Activated CD4-positive, alpha-beta T cell treated with anti-CD3 and anti-CD28 coated beads, Interleukin-2, amount 10 ng/mL, durations not matched to agents 24 days and 14 days (primary cell): ENCODE measurements at regions of chr4 and their contacts with region 1.

Region 1: DNA sequence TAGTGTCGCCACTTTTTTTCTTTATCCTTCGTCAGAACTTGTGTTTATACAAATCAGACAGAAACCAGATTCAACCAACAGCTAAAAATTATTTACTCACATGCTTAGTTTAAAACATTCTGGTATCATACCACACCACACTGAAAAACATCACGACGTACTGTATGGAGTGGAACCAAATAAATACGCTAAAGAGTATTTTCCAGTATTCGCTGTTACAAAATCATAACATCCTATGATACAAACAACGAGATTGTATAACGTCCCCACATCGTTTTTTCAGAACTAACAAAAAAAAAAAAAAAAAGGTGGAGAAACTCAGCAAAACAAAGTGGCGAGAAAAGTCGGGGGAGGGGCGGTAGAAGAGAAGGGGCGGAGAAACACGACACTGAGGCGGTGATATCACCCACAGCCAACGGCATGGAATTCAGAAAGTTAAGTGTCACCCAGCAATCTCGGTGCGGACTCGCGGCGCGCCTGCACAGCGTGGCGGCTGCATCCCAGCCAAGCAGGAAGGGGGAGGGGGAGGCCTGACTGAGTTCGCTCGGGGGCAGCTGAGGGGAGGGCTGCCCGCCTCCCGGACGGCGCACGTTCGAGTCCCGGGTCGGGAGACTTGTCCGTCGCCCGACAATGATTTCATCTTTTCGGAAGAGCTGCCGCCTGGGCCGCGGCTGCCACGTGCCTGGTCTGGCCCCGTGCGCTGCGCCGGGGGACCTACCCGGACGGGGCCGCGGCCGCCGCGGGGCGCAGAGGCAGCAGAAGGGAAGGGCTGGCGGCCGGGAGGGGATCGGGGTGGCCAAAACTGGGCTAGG is 920 bp downstream of the SETD7 start:
- DNase-seq: peak; percentile 95
- H3K4me3 Mint-ChIP-seq: peak overlapping the region; percentile 89
- H3K27ac Mint-ChIP-seq: peak overlapping the region; percentile 97
- H3K4me1 Mint-ChIP-seq: peaks cover 38% of the 10 kb centered on the region
- H3K27me3 Mint-ChIP-seq: peaks cover 7% of the 10 kb centered on the region

Region 2: GRCh38 chr4:139015269-139015947 is 539.7 kb before region 1 on chr4 and contains the start of gene NOCT:
- intact Hi-C with region 1: loop called (anchors 1 kb)
- DNase-seq: peak; percentile 97
- H3K4me3 Mint-ChIP-seq: peak within 1 kb of the TSS; percentile 93
- H3K27ac Mint-ChIP-seq: peak within 1 kb of the TSS; percentile 96
- H3K4me1 Mint-ChIP-seq: peaks cover 35% of the 10 kb centered on the region
- H3K27me3 Mint-ChIP-seq: no peaks in the 10 kb centered on the region
- total RNA-seq, gene NOCT: 21.3 and 25.3 TPM in 2 replicates

Region 3: DNA sequence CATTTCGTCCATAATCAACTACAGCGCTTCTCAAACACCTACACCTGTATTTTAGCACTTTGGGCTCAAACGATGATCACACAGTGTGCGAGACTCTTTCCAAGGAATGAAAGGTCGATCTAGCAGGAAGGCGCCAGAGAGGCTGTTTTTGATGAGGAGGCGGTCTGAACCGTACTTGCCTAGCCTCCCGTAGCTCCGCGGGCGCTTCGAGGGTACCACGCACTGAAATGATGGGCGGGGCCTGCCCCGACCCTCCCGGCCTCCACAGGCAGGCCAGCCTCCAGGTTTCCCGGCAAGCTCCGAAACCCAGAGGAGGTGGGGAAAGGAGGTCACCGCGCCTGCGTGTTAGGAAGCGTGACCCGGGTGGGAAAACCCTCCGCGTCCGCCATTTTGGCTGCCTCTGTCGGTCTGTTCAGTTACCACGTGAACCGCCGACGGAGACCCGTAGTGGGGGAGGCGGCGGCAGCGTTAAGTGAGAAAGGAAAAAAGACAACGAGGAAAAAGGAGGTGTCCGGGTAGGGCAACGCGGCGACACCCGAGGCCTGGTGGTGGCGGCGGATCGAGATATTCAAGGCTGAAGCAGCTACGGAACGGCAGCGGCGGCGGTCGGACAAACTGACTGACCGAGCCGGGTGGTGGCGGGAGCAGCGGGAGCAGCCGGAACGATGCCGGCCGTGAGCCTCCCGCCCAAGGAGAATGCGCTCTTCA is 253.8 kb before region 1 on chr4 and contains the start of gene NAA15:
- intact Hi-C with region 1: loop called (anchors 2 kb)
- DNase-seq: peak; percentile 99
- H3K4me3 Mint-ChIP-seq: peak within 1 kb of the TSS; percentile 99
- H3K27ac Mint-ChIP-seq: peak within 1 kb of the TSS; percentile 100
- H3K4me1 Mint-ChIP-seq: peaks cover 52% of the 10 kb centered on the region
- H3K27me3 Mint-ChIP-seq: no peaks in the 10 kb centered on the region
- total RNA-seq, gene NAA15: 114 and 115 TPM in 2 replicates

Region 4: DNA sequence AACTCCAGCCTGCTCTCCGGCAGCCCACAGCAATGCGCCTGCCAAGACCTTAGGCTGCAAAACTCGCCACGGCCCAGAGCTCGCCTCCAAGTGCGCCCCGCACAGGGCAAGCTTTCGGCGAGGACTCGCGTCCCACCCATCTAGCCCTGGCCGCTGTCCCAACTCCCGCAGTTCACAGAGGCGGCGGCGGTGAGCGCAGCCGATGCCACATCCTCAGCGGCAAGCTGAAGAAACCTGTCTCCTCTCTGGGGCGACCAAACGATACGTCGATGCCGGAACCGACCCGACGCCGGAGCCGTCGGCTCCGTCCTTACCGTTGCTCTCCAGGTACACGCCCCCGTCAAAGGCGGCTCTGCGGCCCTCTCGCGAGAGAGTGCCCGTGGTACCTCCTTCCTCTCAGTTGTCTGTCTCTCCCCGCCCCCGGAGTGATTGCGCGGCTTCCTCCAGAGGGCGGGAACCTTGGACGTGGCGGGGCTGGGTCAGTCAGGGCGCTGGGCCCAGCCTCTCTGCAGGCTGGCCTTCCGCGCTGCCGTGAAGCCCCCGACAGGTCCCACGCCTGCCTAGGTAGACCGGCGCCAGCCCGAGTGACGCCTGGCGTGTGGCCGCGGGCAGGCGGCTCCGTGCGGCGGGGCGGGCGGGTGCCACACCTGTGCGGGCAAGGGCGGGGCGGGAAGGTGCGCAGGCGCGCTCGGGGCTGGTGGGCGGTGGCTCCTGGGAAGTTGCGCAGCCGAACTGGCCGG is 101.6 kb before region 1 on chr4:
- intact Hi-C with region 1: loop called (anchors 1 kb)
- DNase-seq: peak; percentile 99
- H3K4me3 Mint-ChIP-seq: peak overlapping the region; percentile 92
- H3K27ac Mint-ChIP-seq: peak overlapping the region; percentile 96
- H3K4me1 Mint-ChIP-seq: peaks cover 49% of the 10 kb centered on the region
- H3K27me3 Mint-ChIP-seq: no peaks in the 10 kb centered on the region

Region 5: DNA sequence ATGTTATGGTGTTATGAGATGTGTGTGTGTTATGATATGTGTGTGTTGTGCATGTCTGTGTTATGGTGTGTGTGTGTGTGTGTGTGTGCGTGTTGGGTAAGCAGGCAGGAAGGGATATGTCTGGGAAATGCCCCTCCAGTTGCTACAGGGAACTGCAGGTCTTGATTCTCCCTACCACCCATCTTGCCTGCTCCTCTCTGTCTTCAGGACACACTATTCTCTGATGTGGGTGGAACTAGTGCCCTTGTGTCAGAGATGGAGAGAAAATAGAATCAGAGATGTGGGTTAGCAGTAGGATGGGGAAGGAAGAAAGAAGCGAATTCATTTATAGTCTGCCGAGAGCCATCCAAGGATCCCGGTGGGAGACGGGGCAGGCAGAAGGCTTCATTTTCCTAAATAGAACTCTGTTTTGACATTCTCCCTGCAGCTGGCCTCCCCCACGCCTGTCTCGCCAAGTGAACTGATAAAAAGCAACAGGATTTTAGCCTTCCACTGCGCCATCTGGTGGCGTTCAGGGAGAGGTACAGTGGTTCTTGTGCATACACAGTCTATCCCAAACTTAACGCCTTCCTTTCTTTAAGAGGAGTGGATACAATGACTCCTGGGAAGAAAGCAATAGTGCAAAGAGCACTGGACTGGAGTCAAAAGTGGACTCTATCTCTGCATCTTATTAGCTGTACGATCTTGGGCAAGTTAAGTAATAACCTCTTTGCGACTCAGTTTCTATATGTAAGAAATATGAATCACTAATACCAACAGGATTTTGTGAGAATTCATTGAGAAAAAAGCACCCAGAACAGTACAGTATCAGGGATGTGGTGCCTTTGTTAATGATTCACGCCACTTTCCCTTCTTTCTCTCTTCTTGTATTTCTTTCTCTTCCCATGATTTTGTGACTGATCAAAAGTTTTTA is 96.4 kb after region 1 on chr4:
- intact Hi-C with region 1: loop called (anchors 2 kb)
- DNase-seq: peak; percentile 88
- H3K4me3 Mint-ChIP-seq: no peak overlapping the region
- H3K27ac Mint-ChIP-seq: no peak overlapping the region
- H3K4me1 Mint-ChIP-seq: peaks cover 10% of the 10 kb centered on the region
- H3K27me3 Mint-ChIP-seq: peaks cover 5% of the 10 kb centered on the region

Region 6: DNA sequence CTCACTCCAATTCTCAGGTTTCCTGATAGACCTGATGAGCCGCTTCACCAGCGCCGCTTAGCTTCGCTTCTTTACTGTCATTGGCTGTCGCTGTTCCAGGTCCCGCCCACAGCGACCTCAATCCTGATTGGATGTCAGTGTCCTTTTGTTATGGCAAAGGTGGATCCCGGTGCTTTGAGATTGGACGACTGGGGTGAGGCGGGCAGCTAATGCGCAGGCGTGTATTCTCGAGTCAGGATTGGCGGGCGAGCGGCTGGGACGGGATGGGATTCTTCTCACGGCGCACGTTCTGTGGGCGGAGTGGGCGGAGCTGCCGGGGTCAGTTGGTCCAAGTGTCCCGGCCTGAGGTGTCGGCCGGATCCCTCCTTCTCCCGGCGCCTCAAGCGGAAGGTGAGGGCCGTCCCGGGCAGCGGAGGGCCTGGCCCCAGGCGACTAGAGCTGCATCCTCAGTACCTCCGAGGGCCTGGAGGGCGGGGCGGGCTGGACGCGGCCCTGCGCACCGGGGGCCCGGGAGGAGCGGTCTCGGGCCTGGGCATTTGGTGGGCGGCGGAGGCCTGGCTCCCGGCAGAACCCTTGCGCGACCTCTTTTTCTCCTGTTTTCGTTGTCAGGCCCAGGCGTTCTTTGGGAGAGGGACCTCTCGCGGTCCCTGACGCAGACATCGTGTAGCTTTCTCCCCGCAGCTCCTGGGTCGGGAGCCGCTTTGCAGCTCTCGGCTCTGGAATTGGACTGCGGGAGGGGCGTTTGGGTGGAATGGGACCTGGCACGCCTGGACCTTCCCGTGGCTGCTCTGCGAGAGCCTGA is 818.4 kb after region 1 on chr4 and contains the start of gene SCOC:
- intact Hi-C with region 1: loop called (anchors 2 kb)
- DNase-seq: peak; percentile 99
- H3K4me3 Mint-ChIP-seq: no peak within 1 kb of the TSS
- H3K27ac Mint-ChIP-seq: peak within 1 kb of the TSS; percentile 65
- H3K4me1 Mint-ChIP-seq: peaks cover 24% of the 10 kb centered on the region
- H3K27me3 Mint-ChIP-seq: no peaks in the 10 kb centered on the region
- total RNA-seq, gene SCOC: 33.7 and 33.8 TPM in 2 replicates